WTC11 (cell line): ENCODE measurements at regions of chr2 and their contacts with region 1.

Region 1: GRCh38 chr2:134897932-134898331 is 20.7 kb upstream of the CCNT2 start:
- DNase-seq: no peak
- ATAC-seq: no peak
- H3K4me3 Mint-ChIP-seq: no peak overlapping the region
- H3K27ac Mint-ChIP-seq: no peak overlapping the region
- H3K4me1 Mint-ChIP-seq: no peaks in the 10 kb centered on the region
- H3K27me3 Mint-ChIP-seq: no peaks in the 10 kb centered on the region
- CTCF ChIP-seq: no peak

Region 2: DNA sequence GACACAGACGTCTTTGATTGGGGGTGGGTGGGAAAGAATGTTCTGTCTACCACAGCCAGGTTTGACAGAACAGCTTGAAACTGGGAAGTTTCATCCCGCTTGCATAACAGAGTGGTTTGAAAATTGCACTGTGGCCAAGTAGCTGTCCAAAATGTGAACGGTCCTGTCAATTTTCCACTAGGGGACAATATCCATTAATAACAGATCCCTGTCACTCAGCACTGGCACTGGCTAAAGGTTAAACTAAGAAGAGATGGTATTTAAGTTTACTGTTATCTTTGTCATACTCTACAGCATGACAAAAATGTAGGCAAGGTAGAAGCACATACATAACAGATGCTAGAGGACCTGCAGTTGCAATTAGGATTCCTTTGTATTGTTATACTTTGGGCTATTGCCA is 115.1 kb before region 1 on chr2:
- CTCF ChIA-PET with region 1: interaction called, 15 read pairs
- POLR2A ChIA-PET with region 1: no interaction called
- DNase-seq: no peak
- ATAC-seq: peak; percentile 69
- H3K4me3 Mint-ChIP-seq: no peak overlapping the region
- H3K27ac Mint-ChIP-seq: no peak overlapping the region
- H3K4me1 Mint-ChIP-seq: no peaks in the 10 kb centered on the region
- H3K27me3 Mint-ChIP-seq: no peaks in the 10 kb centered on the region
- CTCF ChIP-seq: peak; percentile 43; the same call in 1 of the 2 replicates

Region 3: DNA sequence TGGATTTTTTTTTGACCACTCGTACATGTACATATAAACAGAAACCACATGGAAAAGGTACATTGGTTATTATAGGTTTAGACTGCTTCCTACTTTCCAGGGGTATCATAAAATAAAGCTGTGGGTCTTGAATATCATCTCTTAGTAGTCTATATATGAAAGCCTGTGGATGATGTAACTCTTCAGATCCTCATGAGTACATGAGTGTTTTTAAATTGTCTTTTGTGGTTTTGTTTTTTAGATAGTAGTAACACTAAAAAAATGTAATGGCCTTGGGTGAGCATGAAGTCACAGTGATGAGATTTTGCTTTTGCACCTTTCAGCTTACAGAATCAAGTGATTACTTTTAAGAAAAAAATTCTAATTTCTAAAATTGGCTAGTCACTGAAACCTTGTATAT is 234.4 kb after region 1 on chr2:
- CTCF ChIA-PET with region 1: no interaction called
- POLR2A ChIA-PET with region 1: no interaction called
- DNase-seq: no peak
- ATAC-seq: no peak
- H3K4me3 Mint-ChIP-seq: no peak overlapping the region
- H3K27ac Mint-ChIP-seq: no peak overlapping the region
- H3K4me1 Mint-ChIP-seq: no peaks in the 10 kb centered on the region
- H3K27me3 Mint-ChIP-seq: no peaks in the 10 kb centered on the region
- CTCF ChIP-seq: no peak